ENCODE measurements at regions of chr19 and their contacts with region 1.

Region 1: DNA sequence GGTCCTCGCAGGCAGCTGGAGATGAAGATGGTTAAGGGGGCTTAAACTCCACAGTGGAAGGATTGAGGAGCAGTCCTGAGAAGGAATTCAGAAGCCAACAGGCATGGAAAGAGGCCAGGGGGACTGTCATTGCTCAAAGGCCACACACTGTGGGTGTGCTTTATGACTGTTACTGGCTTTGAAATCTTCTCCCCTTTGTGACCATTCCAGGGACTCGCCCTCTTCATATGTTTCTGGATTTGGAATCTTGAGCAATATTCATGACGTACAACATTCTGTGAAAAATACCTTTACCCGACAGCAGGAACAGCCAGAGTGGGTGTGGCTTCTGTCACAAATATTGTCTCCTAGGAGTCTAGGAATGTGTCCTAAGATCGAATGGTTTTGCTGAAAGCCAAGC is 16.6 kb downstream of the CEACAM7 start:
- DNase-seq: no peak
- H3K4me3 ChIP-seq: no peak overlapping the region
- H3K27ac ChIP-seq: no peak overlapping the region
- H3K4me1 ChIP-seq: no peaks in the 10 kb centered on the region
- H3K27me3 ChIP-seq: peaks cover 34% of the 10 kb centered on the region
- CTCF ChIP-seq: no peak

Region 2: GRCh38 chr19:41479757-41480191 is 191.7 kb before region 1 on chr19:
- CTCF ChIA-PET with region 1: no interaction called
- POLR2A ChIA-PET with region 1: no interaction called
- intact Hi-C with region 1: loop called (anchors 10 kb)
- DNase-seq: no peak
- H3K4me3 ChIP-seq: no peak overlapping the region
- H3K27ac ChIP-seq: no peak overlapping the region
- H3K4me1 ChIP-seq: no peaks in the 10 kb centered on the region
- H3K27me3 ChIP-seq: peaks cover 66% of the 10 kb centered on the region
- CTCF ChIP-seq: no peak

Region 3: DNA sequence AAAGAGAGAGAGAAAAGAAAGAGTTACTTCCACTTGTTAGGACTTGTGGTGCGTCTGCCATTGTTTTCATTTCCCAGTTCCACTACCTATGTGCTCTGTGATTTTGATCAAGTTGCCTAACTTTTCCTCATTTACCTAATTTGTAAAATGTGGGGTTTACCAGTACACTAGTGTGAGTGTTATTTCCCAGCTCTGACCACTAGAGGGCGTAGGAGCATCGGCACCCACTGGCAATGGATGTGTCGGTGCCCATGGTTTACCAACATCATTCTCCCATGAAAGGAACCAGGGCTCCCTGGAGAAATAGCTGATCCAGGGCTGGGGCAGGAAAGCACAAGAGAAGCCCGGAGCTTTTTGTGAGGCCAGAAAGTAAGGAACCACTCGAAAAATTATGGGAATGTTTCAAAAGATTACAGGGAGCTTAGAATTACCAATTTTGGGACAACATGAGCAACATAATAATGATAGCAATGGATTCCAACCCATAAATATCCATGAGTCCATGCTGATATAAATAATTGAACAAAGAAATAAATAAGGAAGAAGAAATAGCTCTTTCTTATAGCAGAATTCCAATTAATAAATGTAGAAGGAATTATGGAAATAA is 29.5 kb before region 1 on chr19:
- CTCF ChIA-PET with region 1: no interaction called
- POLR2A ChIA-PET with region 1: no interaction called
- intact Hi-C with region 1: no loop called
- DNase-seq: peak; percentile 84
- H3K4me3 ChIP-seq: no peak overlapping the region
- H3K27ac ChIP-seq: no peak overlapping the region
- H3K4me1 ChIP-seq: no peaks in the 10 kb centered on the region
- H3K27me3 ChIP-seq: no peaks in the 10 kb centered on the region
- CTCF ChIP-seq: peak; percentile 95

Measured in A673 (cell line).